Right ventricle myocardium inferior (tissue), 1 donor: ENCODE measurements at regions of chr7 and their contacts with region 1.

Region 1: DNA sequence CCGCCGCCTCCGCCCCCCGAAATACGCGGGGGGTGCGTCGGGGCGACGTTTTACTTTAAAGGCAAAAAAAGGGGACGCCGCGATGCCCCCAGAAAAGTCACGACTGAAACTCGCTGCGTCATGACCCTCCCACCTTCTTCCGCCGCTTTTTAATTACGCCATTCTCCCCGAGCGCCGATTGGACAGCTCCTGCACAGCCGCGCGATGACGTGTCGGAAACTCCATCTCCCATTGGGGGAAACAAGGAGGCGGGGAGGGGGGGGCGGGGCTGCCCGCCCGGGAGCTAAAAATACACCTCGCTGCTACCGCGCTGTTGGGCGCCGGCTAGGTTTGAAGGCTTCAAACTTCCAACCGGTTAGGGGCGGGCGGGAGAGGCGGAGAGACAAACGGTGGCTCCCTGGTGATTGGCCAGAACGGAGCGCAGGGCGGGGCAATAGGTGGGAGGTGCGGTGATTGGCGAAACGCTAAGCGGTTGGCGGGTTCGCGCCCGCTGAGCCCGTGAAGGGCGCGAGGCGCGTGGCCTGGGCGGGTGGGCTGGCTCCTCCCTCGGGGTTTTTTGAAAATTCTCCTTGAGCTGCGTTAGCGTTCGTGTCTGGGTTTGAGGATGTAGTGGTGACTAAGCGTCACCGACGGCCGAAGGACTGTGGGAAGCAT is at the start of gene RHEB:
- DNase-seq: peak; percentile 98
- ATAC-seq: peak; percentile 96
- total RNA-seq, gene RHEB: 135 TPM

Region 2: DNA sequence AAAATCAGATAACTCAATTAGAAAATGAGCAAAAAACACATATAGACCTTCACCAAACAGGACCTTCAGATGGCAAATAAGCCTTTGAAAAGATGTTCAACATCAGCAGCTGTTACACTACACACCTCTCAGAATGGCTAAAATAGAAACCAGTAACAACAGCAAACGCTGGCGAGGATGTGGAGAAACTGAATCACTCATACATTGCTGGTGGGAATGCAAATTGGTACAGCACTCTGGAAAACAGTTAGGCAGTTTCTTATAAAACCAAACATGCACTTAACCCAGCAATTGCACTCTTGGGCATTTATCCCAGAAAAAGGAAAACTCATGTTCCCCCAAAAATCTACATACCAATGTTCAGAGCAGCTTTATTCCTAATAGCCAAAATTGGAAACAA is 233.7 kb before region 1 on chr7:
- intact Hi-C with region 1: no loop called
- DNase-seq: no peak
- ATAC-seq: no peak

Region 3: GRCh38 chr7:151459726-151460473 is 60.0 kb before region 1 on chr7:
- intact Hi-C with region 1: loop called (anchors 5 kb)
- DNase-seq: peak; percentile 92
- ATAC-seq: peak; percentile 87

Region 4: DNA sequence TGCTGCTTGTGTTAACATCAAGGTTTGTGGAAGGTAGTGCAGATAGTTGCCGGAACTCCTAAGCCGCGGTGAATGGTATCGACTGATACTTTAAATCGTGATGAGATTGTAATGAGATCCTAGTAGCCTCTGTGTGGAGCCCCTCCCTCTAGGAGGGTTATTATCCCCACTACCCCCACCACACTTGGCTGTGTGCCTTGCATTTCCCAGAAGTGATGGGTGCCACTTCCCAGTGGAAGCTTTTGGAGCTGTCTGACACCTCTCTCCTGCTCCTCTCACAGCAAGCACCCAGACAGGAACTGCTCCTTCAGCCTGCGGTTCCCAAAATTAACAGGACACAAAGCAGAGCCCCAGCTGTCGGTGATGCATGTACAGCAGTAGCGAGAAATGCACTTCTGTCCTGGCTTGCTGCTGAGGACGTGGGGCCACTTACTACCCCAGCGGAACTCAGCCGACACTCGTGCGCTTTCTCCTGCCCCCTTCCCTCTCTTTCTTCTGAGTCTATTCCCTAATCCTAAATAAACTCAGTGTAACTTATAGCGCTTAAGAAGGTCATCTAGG is 304.6 kb after region 1 on chr7:
- intact Hi-C with region 1: no loop called
- DNase-seq: peak; percentile 64
- ATAC-seq: no peak